ENCODE measurements at regions of chr14 and their contacts with region 1.

Region 1: GRCh38 chr14:70359181-70360090 is at the start of gene COX16:
- DNase-seq: peak; percentile 96
- ATAC-seq: peak; percentile 95
- H3K4me3 ChIP-seq: peak within 1 kb of the TSS; percentile 78 to 83
- H3K27ac ChIP-seq: peak within 1 kb of the TSS; percentile 52
- H3K4me1 ChIP-seq: peaks cover 5 to 14% of the 10 kb centered on the region in 2 experiments; a peak in 3 of 4 replicates
- H3K27me3 ChIP-seq: no peaks in the 10 kb centered on the region
- CTCF ChIP-seq: no peak
- POLR2A ChIP-seq: peak; percentile 85
- RAD21 ChIP-seq: 0 out of 2 replicates have a peak, but pooled peaks have one; percentile 7
- total RNA-seq, gene COX16: 52.4 TPM

Region 2: GRCh38 chr14:70281939-70282338 is 77.5 kb before region 1 on chr14:
- CTCF ChIA-PET with region 1: no interaction called
- POLR2A ChIA-PET with region 1: no interaction called
- RAD21 ChIA-PET with region 1: no interaction called
- intact Hi-C with region 1: no loop called
- DNase-seq: no peak
- ATAC-seq: no peak
- H3K4me3 ChIP-seq: no peak overlapping the region
- H3K27ac ChIP-seq: no peak overlapping the region
- H3K4me1 ChIP-seq: peaks cover 5 to 7% of the 10 kb centered on the region in 2 experiments; a peak in 3 of 4 replicates
- H3K27me3 ChIP-seq: peaks cover 17% of the 10 kb centered on the region; the same call in 1 of the 2 replicates
- CTCF ChIP-seq: no peak
- POLR2A ChIP-seq: no peak
- RAD21 ChIP-seq: no peak

Region 3: DNA sequence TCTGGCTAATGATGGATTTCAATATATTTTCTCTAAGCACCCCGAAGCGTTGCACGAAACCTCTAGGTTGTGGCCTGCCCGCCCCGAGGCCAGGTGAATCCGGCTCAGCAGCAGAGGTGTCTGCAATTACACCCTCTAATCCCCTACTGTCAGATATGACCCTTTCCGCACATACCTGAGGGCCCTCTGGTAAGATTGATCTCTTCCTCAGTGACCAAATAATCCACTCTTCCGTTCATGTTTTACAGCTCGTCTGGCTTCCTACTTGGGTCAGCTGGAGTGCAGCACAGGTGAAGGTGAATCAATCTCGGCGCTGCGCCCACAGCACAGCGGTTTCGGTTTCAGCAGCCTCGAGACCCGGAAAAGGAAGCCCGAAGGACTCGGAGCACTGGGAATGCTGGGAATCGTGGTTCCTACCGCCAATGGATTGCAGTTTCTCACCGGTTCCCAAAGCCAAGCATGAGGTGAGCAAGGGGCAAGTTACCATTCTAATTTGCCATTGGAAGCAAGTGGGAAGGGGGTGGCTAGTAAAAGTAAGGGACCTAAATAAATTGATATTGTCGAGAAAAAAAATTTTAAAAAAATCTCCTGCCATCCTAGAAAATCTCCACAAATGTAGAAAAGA is 57.4 kb after region 1 on chr14 and contains the start of gene SYNJ2BP:
- CTCF ChIA-PET with region 1: no interaction called
- POLR2A ChIA-PET with region 1: no interaction called
- RAD21 ChIA-PET with region 1: no interaction called
- intact Hi-C with region 1: loop called (anchors 1 kb)
- DNase-seq: peak; percentile 69
- ATAC-seq: peak; percentile 98
- H3K4me3 ChIP-seq: peak within 1 kb of the TSS; percentile 81 to 91
- H3K27ac ChIP-seq: peak within 1 kb of the TSS; percentile 46
- H3K4me1 ChIP-seq: peaks cover 5 to 13% of the 10 kb centered on the region in 2 experiments; a peak in 3 of 4 replicates
- H3K27me3 ChIP-seq: no peaks in the 10 kb centered on the region
- CTCF ChIP-seq: no peak
- POLR2A ChIP-seq: peak; percentile 67
- RAD21 ChIP-seq: no peak
- total RNA-seq, gene SYNJ2BP: 19.0 TPM